ENCODE measurements at regions of chr13 and their contacts with region 1.

Region 1: GRCh38 chr13:21638319-21639282 is 32.3 kb upstream of the FGF9 start:
- DNase-seq: peak; percentile 50
- CTCF ChIP-seq: peak; percentile 59

Region 2: DNA sequence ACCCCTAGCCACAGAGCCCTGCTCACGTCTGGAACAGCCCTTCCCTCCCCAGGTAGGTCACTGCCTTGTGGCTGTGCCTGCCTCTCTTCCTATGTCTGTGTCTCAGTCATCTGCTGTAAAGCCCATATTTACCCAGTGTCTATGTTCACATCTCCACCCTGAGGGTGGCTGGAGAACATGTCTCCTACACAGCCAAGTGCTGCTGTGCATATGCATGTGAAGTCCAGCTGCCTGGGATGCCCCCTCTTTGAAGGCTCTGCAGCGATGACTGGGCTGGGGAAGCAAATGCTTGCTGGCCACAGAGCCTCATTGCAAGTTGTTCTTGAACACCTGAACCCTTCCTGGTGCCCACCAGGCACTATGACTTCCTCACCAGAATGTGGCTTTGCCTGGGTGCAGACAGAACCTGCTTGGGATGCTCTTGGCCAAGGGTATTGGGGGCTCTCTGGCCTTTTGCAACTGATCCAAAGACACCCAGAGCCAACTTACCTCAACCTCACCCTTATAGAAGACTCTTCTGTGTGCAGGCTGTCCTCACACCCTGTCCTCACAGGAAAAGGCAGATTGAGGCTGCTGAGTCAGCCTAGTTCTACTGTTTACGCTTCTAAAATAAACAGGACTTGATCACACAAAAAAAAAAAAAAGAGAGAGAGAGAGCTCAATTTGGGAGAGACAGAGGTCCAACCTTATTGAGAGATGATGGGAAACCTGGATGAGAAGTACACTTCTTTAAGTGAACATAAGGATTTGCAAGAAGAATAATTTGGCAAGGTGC is 435.6 kb before region 1 on chr13:
- CTCF ChIA-PET with region 1: no interaction called
- POLR2A ChIA-PET with region 1: no interaction called
- DNase-seq: no peak
- CTCF ChIP-seq: no peak

Region 3: GRCh38 chr13:21389124-21389523 is 249.5 kb before region 1 on chr13:
- CTCF ChIA-PET with region 1: no interaction called
- POLR2A ChIA-PET with region 1: no interaction called
- DNase-seq: no peak
- CTCF ChIP-seq: no peak

Region 4: DNA sequence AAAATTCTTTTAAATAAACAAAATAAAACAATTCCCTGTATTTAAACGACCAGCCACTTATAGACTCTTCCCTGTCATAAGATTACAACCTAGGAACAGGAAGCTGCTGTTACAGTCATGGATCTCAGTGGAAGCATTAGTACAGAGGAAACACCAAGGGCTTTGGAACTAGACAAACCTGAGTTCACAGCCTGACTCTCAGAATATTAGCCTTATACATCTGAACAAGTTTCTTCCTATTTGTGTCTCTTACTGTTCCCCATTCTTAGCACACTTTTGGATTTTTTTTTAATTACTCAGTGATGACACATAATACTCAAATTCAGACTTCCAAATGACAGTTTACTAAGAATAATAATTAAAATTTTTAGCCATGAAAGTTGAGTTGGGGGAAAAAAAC is 225.6 kb before region 1 on chr13:
- CTCF ChIA-PET with region 1: no interaction called
- POLR2A ChIA-PET with region 1: no interaction called
- DNase-seq: no peak
- CTCF ChIP-seq: no peak

Region 5: GRCh38 chr13:21616880-21617279 is 21.7 kb before region 1 on chr13:
- CTCF ChIA-PET with region 1: interaction called, 15 read pairs
- POLR2A ChIA-PET with region 1: no interaction called
- DNase-seq: no peak
- CTCF ChIP-seq: no peak

Region 6: GRCh38 chr13:21663197-21663596 is 24.6 kb after region 1 on chr13:
- CTCF ChIA-PET with region 1: interaction called, 27 read pairs
- POLR2A ChIA-PET with region 1: no interaction called
- DNase-seq: no peak
- CTCF ChIP-seq: no peak

Region 7: DNA sequence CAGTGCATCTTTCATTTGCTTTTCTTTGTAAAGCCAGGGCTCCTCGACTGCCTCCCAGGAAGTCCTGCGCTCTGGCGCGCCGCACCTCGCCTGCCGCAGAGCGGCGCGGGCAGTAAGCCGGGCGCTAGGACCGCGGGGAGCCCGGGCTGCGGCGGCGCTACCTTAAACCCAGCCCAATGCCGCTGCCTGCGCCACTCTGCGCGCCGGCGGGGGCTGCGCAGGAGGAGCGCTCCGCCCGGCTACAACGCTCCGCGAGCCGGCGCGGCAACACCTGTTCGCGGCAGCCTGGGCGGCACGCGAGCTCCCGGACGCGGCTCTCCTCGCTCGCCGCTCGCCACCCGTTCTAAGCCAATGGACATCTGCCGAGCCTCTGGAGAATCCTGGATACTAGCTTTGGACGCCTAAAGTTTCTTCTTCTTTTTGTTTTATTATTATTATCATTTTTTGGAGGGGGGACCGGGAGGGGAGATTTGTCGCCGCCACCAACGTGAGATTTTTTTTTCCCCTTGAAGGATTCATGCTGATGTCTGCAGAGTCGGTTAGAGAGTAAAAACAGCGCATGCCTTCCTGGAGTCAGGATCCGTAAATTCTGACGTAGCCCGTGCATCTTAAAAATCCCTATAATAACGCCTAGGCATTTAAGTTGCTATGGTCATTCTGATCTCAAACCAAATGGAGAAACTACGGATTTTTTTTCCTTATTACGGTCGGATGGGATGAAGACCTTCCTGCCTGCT is 32.5 kb after region 1 on chr13 and contains the start of gene FGF9:
- CTCF ChIA-PET with region 1: interaction called, 27 read pairs
- POLR2A ChIA-PET with region 1: no interaction called
- DNase-seq: peak; percentile 87
- CTCF ChIP-seq: peak; percentile 9

Region 8: DNA sequence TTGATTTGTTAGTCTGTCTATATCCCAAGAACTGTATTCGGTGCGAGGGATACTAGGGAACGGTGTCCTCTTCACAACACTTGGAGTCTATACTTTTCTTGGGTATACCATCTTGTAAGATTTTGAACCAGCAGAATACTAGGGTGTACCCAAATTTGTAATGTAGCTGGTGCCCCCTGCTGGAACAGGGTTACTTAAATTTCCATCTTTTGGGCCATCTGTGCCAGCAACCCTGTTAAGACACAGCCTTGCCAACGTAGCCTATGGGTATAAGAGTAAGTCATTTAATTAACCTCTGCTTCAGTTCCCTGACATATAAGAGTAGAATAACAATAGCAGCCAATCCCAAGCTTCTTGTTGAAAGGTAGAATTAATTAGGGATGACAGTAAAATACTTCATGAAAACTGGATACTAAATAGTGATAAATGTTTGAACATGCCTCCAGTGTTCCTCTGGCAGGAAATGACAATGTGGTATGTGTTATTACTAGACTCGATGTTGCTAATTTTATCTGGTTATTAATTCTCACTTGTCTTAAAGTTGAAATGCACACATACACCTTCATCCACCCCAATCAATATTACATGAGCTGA is 639.8 kb after region 1 on chr13:
- CTCF ChIA-PET with region 1: interaction called, 40 read pairs
- POLR2A ChIA-PET with region 1: no interaction called
- DNase-seq: peak; percentile 42
- CTCF ChIP-seq: peak; percentile 61

Region 9: GRCh38 chr13:22801402-22802003 is 1162.9 kb after region 1 on chr13:
- CTCF ChIA-PET with region 1: interaction called, 10 read pairs
- POLR2A ChIA-PET with region 1: no interaction called
- DNase-seq: no peak
- CTCF ChIP-seq: peak; percentile 31